CD8-positive, alpha-beta T cell (primary cell): ENCODE measurements at regions of chr6 and their contacts with region 1.

Region 1: DNA sequence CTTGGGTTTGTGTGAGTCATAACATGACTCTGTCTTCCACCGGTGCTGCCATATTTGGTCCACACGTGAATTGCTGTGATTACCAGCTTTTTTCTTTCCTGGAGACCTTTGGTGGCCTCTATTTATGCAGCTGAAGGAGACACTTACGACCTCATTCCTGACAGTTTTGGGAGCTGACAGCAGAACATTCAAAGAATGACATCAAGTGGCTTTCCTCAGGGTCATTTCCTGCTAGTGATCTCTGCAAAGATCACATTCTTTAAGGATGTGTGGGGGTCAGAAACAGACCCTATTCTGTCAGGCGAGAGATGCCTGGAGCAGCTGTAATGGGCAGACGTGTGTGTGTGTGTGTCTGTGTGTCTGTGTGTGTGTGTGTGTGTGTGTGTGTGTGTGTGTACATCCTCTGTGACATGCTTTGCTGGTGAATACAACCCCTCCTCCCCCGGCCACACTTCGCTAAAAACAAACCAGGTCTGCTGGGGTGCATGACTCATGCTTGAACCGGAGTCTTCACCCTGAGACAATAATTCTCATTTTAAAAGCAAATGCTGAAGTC is 115.6 kb downstream of the TMEM170B start:
- DNase-seq: peak in 7 of 9 experiments; percentile 7 to 52 (median 33)
- ATAC-seq: peak; percentile 78
- H3K4me3 ChIP-seq: no peak overlapping the region
- H3K4me3 Mint-ChIP-seq: no peak overlapping the region
- H3K27ac ChIP-seq: no peak overlapping the region
- H3K27ac Mint-ChIP-seq: no peak overlapping the region
- H3K4me1 ChIP-seq: peaks cover 4% of the 10 kb centered on the region
- H3K4me1 Mint-ChIP-seq: peaks cover 4% of the 10 kb centered on the region
- H3K27me3 ChIP-seq: no peaks in the 10 kb centered on the region
- H3K27me3 Mint-ChIP-seq: peaks cover 5% of the 10 kb centered on the region
- CTCF ChIP-seq: no peak

Region 2: DNA sequence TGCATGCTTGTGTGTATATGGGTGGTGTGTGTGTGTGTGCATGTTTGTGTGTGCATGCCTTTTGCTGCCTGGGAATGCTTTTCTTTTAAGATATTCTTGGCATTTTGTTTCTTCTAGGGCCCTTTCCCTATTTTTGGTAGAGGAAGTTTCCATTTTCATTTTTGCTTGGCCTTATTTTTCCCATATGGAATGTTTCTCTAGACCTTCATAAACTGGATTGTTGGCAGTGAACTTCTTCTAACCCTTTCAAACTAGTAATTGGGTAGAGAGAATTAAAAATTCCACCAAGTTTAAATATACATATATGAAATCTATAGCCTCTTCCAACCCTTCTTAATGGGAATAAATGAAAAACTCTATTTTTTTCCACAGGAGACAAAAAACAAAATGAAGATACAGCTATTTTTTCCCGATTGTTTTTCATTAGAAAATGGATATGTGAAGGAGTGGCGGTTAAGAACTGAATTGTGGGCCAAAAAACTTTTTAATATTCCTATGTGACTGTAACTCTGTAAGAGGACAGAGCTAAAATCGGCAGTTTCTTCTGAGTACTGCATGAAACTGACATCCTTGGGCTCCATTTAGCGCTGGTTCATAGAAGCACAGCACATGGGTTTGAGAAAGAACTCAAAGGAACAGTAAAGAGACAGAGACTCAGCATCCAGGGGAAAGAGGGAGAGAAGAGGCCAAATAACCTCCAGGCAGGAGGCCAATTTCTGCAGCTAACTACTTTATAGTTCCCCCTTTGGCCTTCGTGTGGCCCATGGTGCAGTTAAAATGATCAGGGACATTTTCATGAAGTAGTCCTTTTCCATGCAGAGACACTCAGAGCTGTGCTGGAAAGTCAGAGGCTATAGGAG is 13.5 kb before region 1 on chr6:
- CTCF ChIA-PET with region 1: interaction called, 20 read pairs
- POLR2A ChIA-PET with region 1: no interaction called
- intact Hi-C with region 1: no loop called
- DNase-seq: no peak
- ATAC-seq: no peak
- H3K4me3 ChIP-seq: no peak overlapping the region
- H3K4me3 Mint-ChIP-seq: no peak overlapping the region
- H3K27ac ChIP-seq: no peak overlapping the region
- H3K27ac Mint-ChIP-seq: no peak overlapping the region
- H3K4me1 ChIP-seq: no peaks in the 10 kb centered on the region
- H3K4me1 Mint-ChIP-seq: no peaks in the 10 kb centered on the region
- H3K27me3 ChIP-seq: no peaks in the 10 kb centered on the region
- H3K27me3 Mint-ChIP-seq: no peaks in the 10 kb centered on the region
- CTCF ChIP-seq: no peak

Region 3: GRCh38 chr6:11700118-11700718 is 47.1 kb after region 1 on chr6:
- CTCF ChIA-PET with region 1: interaction called, 12 read pairs
- POLR2A ChIA-PET with region 1: no interaction called
- intact Hi-C with region 1: no loop called
- DNase-seq: peak in 2 of 9 experiments; percentile 49 to 64
- ATAC-seq: no peak
- H3K4me3 ChIP-seq: no peak overlapping the region
- H3K4me3 Mint-ChIP-seq: no peak overlapping the region
- H3K27ac ChIP-seq: no peak overlapping the region
- H3K27ac Mint-ChIP-seq: no peak overlapping the region
- H3K4me1 ChIP-seq: no peaks in the 10 kb centered on the region
- H3K4me1 Mint-ChIP-seq: peaks cover 12% of the 10 kb centered on the region
- H3K27me3 ChIP-seq: peaks cover 0 to 2% of the 10 kb centered on the region in 2 experiments
- H3K27me3 Mint-ChIP-seq: no peaks in the 10 kb centered on the region
- CTCF ChIP-seq: peak; percentile 49

Region 4: DNA sequence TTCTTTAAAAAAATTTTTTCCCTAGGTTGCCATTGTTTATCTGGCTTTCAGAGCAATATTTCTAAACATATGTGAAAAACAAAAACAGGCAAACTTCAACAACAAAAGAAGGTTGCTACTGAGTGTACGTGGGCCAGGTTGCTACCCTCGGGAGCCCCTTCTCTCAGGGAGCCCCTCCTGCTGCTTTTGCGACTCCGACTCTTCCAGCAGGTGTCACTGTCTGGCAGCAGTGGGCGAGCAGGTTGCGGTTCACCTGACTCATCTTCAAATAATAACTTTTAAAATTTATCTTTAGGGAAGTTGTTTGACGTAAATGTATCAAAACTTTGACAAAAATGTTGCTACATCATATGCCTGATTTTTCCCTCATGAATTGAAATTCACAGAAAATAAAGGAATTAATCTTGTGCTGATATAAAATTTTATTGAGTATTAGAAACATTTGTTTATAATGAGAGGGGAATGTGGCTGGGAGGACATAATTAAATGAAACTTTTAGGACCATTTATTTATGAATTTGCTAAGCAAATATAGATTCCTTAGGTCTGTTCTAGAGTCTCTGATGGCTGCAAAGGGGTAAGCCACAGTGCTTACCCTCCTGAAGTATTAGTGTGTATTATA is 497.8 kb after region 1 on chr6:
- CTCF ChIA-PET with region 1: interaction called, 3 read pairs
- POLR2A ChIA-PET with region 1: no interaction called
- intact Hi-C with region 1: loop called (anchors 1 to 5 kb)
- DNase-seq: peak in 8 of 9 experiments; percentile 11 to 63 (median 50)
- ATAC-seq: peak; percentile 73
- H3K4me3 ChIP-seq: no peak overlapping the region
- H3K4me3 Mint-ChIP-seq: no peak overlapping the region
- H3K27ac ChIP-seq: no peak overlapping the region
- H3K27ac Mint-ChIP-seq: no peak overlapping the region
- H3K4me1 ChIP-seq: no peaks in the 10 kb centered on the region
- H3K4me1 Mint-ChIP-seq: no peaks in the 10 kb centered on the region
- H3K27me3 ChIP-seq: no peaks in the 10 kb centered on the region
- H3K27me3 Mint-ChIP-seq: no peaks in the 10 kb centered on the region
- CTCF ChIP-seq: peak; percentile 60

Region 5: DNA sequence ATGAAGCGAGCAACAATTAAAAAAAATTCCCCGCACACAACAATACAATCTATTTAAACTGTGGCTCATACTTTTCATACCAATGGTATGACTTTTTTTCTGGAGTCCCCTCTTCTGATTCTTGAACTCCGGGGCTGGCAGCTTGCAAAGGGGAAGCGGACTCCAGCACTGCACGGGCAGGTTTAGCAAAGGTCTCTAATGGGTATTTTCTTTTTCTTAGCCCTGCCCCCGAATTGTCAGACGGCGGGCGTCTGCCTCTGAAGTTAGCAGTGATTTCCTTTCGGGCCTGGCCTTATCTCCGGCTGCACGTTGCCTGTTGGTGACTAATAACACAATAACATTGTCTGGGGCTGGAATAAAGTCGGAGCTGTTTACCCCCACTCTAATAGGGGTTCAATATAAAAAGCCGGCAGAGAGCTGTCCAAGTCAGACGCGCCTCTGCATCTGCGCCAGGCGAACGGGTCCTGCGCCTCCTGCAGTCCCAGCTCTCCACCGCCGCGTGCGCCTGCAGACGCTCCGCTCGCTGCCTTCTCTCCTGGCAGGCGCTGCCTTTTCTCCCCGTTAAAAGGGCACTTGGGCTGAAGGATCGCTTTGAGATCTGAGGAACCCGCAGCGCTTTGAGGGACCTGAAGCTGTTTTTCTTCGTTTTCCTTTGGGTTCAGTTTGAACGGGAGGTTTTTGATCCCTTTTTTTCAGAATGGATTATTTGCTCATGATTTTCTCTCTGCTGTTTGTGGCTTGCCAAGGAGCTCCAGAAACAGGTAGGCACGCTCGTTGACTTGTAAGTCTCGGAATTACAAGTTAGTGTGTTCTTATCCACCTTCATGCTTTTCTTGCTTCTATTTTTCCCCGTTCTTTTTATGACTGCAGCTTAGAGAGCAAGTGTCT is 637.1 kb after region 1 on chr6 and contains the start of gene EDN1:
- CTCF ChIA-PET with region 1: interaction called, 28 read pairs
- POLR2A ChIA-PET with region 1: no interaction called
- intact Hi-C with region 1: loop called (anchors 1 kb)
- DNase-seq: peak in 8 of 9 experiments; percentile 7 to 63 (median 41)
- ATAC-seq: peak; percentile 77
- H3K4me3 ChIP-seq: peak within 1 kb of the TSS; percentile 37 to 49
- H3K4me3 Mint-ChIP-seq: peak within 1 kb of the TSS; percentile 89
- H3K27ac ChIP-seq: no peak within 1 kb of the TSS
- H3K27ac Mint-ChIP-seq: no peak within 1 kb of the TSS
- H3K4me1 ChIP-seq: peaks cover 6% of the 10 kb centered on the region
- H3K4me1 Mint-ChIP-seq: peaks cover 18% of the 10 kb centered on the region
- H3K27me3 ChIP-seq: peaks cover 8 to 9% of the 10 kb centered on the region in 2 experiments
- H3K27me3 Mint-ChIP-seq: peaks cover 43% of the 10 kb centered on the region
- CTCF ChIP-seq: no peak
- total RNA-seq, gene EDN1: 0.95 to 1.0 TPM

Region 6: GRCh38 chr6:12890171-12890790 is 1237.2 kb after region 1 on chr6:
- CTCF ChIA-PET with region 1: interaction called, 6 read pairs
- POLR2A ChIA-PET with region 1: no interaction called
- intact Hi-C with region 1: loop called in 1 of 2 experiments (anchors 1 kb)
- DNase-seq: peak in 2 of 9 experiments; percentile 12 to 14
- ATAC-seq: no peak
- H3K4me3 ChIP-seq: no peak overlapping the region
- H3K4me3 Mint-ChIP-seq: no peak overlapping the region
- H3K27ac ChIP-seq: no peak overlapping the region
- H3K27ac Mint-ChIP-seq: no peak overlapping the region
- H3K4me1 ChIP-seq: no peaks in the 10 kb centered on the region
- H3K4me1 Mint-ChIP-seq: peaks cover 3% of the 10 kb centered on the region
- H3K27me3 ChIP-seq: no peaks in the 10 kb centered on the region
- H3K27me3 Mint-ChIP-seq: peaks cover 11% of the 10 kb centered on the region
- CTCF ChIP-seq: peak; percentile 14